ENCODE measurements at regions of chr12 and their contacts with region 1.

Region 1: GRCh38 chr12:80432055-80432454 is 12.0 kb upstream of the PTPRQ start:
- DNase-seq: no peak
- H3K4me3 ChIP-seq: no peak overlapping the region
- H3K27ac ChIP-seq: no peak overlapping the region
- H3K4me1 ChIP-seq: no peaks in the 10 kb centered on the region
- H3K27me3 ChIP-seq: no peaks in the 10 kb centered on the region
- CTCF ChIP-seq: no peak

Region 2: GRCh38 chr12:80607361-80608135 is 175.5 kb after region 1 on chr12:
- intact Hi-C with region 1: loop called (anchors 10 kb)
- DNase-seq: no peak
- H3K4me3 ChIP-seq: no peak overlapping the region
- H3K27ac ChIP-seq: no peak overlapping the region
- H3K4me1 ChIP-seq: no peaks in the 10 kb centered on the region
- H3K27me3 ChIP-seq: no peaks in the 10 kb centered on the region
- CTCF ChIP-seq: no peak

Region 3: DNA sequence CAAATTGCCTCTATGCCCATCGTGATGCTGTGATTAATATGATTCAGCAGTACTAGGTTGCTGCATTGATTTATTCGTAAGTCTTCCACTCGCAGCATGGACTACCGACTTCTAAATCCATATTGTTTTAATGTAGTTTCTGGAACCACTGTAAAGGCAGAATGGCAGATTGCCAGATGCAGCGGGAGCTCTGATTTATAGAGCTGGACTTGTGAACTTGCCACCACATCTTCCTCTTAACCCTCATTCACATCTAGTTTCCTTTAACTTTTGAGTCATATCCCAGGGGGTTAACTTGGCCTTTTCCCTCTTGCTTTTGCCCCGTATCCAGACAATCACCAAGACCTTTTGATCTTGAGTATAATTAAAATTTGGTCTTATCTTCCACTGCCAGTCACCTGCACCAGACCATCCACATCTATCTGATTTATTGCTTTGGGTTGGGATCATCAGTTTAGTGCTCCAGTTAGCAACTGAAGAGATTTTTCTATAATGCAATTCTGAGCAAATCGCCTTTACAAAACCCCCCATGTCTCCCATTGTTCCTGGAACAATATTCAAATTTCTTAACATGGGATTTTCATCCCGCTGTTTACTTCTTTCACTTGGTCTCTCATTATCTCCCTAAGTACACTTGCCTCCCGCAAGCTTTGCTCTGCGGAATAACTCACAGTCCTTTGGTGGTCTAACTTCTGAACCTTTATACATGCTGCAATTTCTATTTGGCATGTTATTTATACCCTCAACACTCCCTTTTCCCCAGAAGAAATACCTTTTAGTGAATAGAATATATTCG is 776.3 kb after region 1 on chr12:
- intact Hi-C with region 1: no loop called
- DNase-seq: no peak
- H3K4me3 ChIP-seq: no peak overlapping the region
- H3K27ac ChIP-seq: no peak overlapping the region
- H3K4me1 ChIP-seq: peaks cover 0 to 14% (median 5%) of the 10 kb centered on the region in 4 donors
- H3K27me3 ChIP-seq: no peaks in the 10 kb centered on the region
- CTCF ChIP-seq: no peak

Measured in tibial artery (tissue), 4 donors.